ENCODE measurements at regions of chr9 and their contacts with region 1.

Region 1: DNA sequence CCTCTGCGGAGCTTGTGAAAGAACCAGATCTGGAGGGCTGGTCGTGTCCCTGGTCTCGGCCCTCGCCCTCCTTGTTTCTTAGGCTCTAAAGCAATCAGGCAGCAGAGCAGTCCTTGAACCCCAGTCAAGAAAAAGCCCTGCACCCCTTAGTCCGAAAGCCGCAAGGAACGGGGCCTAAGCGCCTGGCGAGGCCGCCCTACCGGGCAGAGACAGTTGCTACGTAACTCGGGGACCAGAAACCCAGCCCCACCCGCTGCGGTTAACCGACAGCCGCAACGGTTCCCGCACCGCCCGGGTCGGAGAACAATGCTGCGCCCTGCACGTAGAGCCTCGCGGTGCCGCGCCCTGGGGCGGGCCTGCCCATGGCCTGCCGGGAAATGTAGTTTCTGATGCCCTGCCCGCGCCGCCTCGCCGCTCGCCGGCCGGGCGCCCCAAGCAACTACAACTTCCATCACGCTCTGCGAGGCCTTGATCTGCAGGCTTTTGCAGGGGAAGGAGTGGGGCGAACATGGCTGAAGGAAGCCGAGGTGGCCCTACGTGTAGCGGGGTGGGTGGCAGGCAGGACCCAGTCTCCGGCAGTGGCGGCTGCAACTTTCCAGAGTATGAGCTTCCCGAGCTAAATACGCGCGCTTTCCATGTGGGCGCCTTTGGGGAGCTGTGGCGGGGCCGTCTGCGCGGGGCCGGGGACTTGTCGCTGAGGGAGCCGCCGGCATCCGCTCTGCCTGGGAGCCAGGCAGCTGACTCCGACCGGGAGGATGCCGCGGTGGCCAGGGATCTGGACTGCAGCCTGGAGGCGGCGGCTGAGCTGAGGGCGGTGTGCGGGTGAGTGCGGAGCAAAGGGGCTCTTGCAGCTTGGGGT is at the start of gene SNAPC3:
- DNase-seq: peak; percentile 76 to 84
- H3K4me3 ChIP-seq: peak within 1 kb of the TSS; percentile 73
- H3K27ac ChIP-seq: no peak within 1 kb of the TSS
- H3K4me1 ChIP-seq: no peaks in the 10 kb centered on the region; the same call in 1 of the 2 replicates
- H3K27me3 ChIP-seq: no peaks in the 10 kb centered on the region
- CTCF ChIP-seq: no peak
- total RNA-seq, gene SNAPC3: 11.3 and 13.7 TPM in 2 replicates

Region 2: DNA sequence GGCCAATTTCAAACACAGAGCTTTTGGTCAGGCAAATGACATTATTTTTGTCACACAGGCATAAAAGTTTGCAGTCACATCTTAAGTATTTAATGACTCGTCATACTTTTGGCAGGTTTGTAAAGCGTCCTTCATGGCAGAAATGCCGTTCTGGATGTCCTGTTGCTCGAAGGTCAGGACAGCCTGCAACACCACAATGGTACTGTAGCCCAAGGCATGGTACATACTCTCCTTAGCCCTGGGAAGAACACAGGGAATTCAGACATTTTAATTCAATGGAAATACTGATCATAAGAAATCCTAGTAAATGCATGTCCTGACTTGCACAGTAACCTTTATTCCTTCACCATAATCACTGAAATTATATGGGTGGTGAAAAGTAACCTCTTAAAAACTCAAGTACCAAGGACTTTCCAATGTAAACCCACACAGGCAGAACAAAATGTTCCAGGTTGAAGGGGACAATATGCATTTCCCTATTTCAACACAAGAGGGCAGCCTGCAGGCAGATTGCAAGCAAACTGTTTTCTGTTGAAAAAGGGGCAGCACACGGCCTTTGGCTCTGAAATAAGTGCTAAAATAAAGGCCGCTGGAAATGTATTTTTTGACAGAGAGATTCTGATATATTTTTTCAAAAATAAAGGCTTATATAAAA is 211.3 kb before region 1 on chr9:
- CTCF ChIA-PET with region 1: no interaction called
- POLR2A ChIA-PET with region 1: no interaction called
- intact Hi-C with region 1: loop called (anchors 1 kb)
- DNase-seq: peak; percentile 28 to 35
- H3K4me3 ChIP-seq: no peak overlapping the region
- H3K27ac ChIP-seq: no peak overlapping the region
- H3K4me1 ChIP-seq: no peaks in the 10 kb centered on the region
- H3K27me3 ChIP-seq: no peaks in the 10 kb centered on the region
- CTCF ChIP-seq: peak; percentile 79

Region 3: DNA sequence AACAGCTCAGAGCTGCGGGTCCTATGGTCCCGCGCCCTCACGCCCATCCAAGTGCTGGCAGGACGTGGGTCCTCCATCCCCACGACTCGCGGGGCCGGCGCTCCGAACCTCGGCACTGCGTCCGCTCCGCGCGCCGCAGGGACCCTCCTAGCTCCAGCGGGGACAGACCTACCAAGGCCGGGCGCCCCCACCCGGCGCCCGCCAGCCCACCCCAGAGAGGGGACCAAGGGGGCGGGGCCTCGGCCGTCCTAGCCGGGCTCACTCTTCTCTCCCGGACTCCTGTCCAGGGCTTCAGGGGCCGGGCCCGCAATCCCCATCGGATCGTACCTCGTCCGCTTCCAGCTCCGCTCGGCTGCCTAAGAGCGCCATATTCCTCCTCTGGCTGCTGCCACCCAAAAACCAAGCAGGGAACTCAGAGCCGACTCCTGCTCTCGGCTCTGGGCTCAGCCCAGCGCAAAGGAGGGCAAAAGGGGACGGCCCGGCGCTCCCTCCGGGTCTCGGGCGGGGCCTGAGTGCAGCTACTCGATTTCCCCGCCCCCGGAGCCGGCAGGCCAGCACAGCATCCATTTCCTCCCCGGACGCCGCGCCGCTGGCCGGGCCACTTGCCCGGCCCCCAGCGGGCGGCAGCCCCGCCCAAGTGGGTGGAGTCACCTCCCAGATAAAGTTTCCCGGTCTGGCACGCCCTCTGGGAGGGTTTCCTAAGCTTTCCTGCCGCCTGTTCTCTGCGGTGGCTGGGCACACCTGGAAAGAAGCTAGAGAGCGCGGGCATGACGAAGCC is 115.7 kb before region 1 on chr9 and contains the start of gene TTC39B:
- CTCF ChIA-PET with region 1: no interaction called
- POLR2A ChIA-PET with region 1: no interaction called
- intact Hi-C with region 1: loop called (anchors 5 kb)
- DNase-seq: peak; percentile 73 to 92
- H3K4me3 ChIP-seq: peak within 1 kb of the TSS; percentile 87
- H3K27ac ChIP-seq: peak within 1 kb of the TSS; percentile 65
- H3K4me1 ChIP-seq: peaks cover 11% of the 10 kb centered on the region
- H3K27me3 ChIP-seq: no peaks in the 10 kb centered on the region
- CTCF ChIP-seq: no peak
- total RNA-seq, gene TTC39B: 8.7 and 8.8 TPM in 2 replicates

Region 4: DNA sequence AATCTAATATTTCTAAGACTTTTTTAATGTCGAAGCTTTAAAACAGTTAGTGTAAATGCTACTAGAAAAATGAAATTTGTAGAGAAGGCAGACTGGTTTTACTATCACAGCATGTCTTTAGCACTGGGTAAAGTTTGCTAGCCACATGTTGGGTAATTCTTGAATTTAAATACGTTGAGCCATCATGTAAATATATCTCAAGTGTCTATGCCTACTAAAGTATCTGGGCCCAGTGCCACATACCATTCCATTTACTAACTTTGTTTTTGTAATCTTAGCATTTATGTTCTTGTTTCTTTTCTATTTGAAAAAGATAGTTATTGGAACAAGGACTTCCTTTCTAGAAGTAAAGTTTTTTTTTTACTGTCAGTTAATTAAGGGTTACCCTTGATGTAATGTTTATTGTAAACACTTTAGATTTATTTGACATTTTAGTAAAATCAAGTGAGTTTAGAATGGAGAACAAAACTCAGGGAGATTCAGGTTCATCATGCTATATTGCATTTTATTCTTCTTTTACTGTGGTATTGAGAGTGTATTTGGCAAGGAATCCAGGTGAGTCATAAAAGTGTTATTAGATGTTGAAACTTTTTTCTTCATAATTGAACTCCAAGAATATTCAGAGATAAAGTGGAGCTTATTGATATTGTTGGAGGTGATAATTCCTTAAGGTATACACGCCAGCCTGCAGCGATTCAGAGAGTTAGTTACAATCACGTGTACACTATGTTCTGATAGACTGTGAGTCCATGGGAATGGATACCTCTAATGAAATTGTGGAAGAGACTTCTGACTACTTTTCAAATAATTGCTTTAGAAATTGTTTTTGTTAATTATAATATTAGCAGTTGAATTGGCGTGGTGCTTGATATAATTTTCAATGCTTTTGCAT is 312.7 kb after region 1 on chr9:
- CTCF ChIA-PET with region 1: no interaction called
- POLR2A ChIA-PET with region 1: no interaction called
- intact Hi-C with region 1: loop called (anchors 10 kb)
- DNase-seq: peak; percentile 16 to 85
- H3K4me3 ChIP-seq: no peak overlapping the region; the same call in 1 of the 2 replicates
- H3K27ac ChIP-seq: peak overlapping the region; percentile 76
- H3K4me1 ChIP-seq: peaks cover 23% of the 10 kb centered on the region
- H3K27me3 ChIP-seq: no peaks in the 10 kb centered on the region
- CTCF ChIP-seq: no peak

Measured in PC-9 (cell line).